Activated naive CD4-positive, alpha-beta T cell treated with anti-CD3 and anti-CD28 coated beads, Interleukin-2, amount 10 ng/mL, durations not matched to agents 7 days and 5 days (primary cell): ENCODE measurements at regions of chr20 and their contacts with region 1.

Region 1: DNA sequence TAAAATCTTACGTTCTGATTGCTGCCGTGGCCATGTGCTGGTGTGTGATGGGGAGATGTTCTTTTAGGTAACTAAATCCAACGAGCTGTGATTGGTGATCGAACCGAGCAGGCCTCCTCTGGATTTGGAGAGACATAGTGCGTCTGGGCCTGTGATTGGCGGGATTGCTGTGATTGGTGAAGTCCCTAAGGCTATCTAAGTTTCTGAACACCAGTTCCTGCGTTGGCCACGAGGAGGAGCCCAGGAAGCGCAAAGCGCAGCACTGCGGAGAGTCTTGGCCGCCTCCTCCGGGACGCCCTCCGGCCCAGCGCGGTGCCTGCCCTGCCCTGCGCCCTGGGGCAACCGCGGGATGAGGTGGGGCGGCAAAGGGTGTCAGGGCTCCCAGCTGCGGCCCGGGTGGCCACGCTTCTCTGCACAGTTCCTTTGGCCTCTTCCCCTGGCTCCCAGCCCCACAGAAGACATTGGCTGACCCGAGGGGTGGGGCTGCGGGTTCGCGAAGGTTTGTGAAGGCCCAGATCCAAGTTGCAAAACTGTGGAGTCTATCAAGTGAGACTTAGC is 33.0 kb downstream of the HNF4A start:
- DNase-seq: peak; percentile 83
- H3K4me3 Mint-ChIP-seq: no peak overlapping the region
- H3K27ac Mint-ChIP-seq: no peak overlapping the region
- H3K4me1 Mint-ChIP-seq: peaks cover 8% of the 10 kb centered on the region
- H3K27me3 Mint-ChIP-seq: peaks cover 25% of the 10 kb centered on the region

Region 2: DNA sequence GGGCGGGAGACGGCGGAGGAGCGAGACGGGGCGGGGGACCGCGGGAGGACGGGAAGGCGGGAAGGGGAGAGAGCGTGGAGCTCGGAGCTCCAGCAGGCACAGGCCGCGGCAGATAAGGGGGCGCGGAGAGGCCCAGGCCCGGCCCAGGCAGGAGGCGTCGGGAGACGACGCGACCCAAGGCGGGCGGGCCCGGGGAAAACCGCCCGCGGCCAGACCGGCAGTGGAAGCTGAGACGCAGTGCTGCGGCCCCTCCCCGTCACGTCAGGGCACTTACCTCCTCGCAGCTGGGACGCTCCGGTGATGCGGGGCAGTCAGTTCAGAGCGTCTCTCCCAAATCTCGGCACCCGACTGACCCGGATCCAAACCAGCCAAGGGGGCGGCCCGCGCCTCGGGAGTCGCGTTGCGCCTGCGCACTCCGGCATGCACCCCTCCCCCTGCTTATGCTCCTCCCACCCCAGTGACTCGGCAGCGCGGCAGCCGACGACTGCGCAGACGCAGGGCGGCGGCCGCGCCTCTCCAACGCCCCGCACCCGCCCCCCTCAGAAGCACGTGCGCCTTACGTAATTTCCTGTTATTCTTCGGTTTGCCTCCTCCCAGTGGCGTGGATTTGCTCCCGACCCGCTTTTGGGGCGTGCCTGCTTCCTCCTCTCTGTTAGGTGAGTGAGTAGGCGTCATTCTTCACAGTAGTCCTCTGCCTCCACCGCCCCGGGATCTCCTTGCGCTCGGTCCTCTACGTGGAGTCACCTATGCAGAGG is 177.9 kb before region 1 on chr20 and contains the start of gene OSER1:
- CTCF ChIA-PET with region 1: interaction called, 100 read pairs
- DNase-seq: peak; percentile 99
- H3K4me3 Mint-ChIP-seq: peak within 1 kb of the TSS; percentile 82
- H3K27ac Mint-ChIP-seq: peak within 1 kb of the TSS; percentile 98
- H3K4me1 Mint-ChIP-seq: peaks cover 54% of the 10 kb centered on the region
- H3K27me3 Mint-ChIP-seq: peaks cover 6% of the 10 kb centered on the region

Region 3: DNA sequence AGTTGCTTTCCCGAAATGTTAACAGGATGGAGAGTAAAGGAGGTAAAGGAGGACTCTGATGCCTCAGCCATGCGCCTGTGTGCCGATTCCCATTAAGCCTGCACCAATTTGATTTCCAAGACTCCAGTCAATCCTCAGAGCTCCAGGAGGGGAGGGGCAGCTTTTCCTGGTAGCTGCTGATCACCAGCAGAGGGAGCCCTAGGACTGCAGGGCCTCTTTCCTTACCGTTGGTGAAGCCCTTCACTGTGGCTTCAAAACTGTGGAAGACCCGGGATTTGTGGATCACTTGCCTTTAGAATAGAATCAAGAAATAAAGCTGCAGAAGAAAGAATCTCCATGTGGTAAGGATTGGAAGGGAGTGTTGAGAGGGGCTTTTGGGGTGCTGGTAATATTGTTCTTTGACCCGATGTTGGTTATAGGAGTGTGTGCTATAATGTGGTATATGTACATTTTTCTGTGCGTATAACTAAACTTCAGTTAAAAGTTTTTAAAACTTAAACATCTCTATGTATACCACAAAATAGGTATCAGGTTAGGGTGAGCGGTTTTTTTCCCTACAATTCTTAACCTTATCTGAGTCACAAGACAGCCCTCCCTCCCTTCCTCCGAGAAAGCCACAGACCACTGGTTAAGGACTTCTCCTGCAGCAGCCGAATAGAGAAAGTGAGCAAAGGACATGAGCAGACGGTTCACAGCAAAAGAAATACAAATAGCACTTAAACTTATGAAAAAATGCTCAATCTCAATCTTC is 171.0 kb before region 1 on chr20:
- CTCF ChIA-PET with region 1: interaction called, 100 read pairs
- DNase-seq: peak; percentile 82
- H3K4me3 Mint-ChIP-seq: peak overlapping the region; percentile 72
- H3K27ac Mint-ChIP-seq: peak overlapping the region; percentile 89
- H3K4me1 Mint-ChIP-seq: peaks cover 58% of the 10 kb centered on the region
- H3K27me3 Mint-ChIP-seq: no peaks in the 10 kb centered on the region

Region 4: DNA sequence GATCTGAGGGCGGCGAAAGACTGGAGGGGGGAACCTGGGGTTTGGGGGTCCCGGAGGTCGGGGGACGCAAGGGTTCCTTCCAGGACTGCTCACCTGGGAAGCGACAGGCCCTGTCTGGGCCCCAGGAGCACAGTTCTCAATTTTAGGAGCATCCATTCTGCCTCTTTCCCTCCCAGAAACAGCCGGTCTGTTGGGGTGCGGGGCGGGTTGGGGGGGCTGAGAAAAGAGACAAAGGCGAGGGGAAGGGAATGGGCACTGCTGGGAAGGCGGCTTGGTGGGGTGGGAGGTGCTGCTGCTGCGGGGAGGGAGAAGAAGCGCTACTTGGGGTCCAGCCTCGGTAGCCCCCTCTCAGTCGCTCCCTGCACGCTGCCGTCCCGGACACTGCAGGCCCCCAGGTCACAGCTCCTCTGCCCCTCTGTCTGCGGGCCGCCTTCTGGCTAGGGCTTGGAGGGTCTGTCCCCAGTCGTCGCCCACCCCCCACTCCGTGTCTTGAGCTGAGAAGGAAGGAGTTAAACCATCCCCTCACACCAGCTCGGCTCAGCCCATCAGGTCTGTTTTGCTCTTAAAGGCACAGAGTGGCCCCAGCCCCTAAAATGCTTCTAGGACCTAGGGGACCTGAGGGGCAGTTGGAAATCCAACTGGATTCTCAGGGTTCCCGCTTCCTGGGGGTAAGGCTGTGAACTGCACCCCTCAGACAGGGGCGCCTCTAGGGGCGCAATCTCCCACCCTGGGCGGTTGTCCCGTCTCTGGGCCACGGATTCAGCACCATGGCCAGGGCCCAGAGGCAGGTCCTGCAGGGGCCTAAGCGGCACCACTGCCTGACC is 140.7 kb before region 1 on chr20:
- CTCF ChIA-PET with region 1: no interaction called
- DNase-seq: peak; percentile 51
- H3K4me3 Mint-ChIP-seq: no peak overlapping the region
- H3K27ac Mint-ChIP-seq: no peak overlapping the region
- H3K4me1 Mint-ChIP-seq: no peaks in the 10 kb centered on the region
- H3K27me3 Mint-ChIP-seq: peaks cover 42% of the 10 kb centered on the region

Region 5: GRCh38 chr20:44288252-44288651 is 100.3 kb before region 1 on chr20:
- CTCF ChIA-PET with region 1: no interaction called
- DNase-seq: peak; percentile 35
- H3K4me3 Mint-ChIP-seq: no peak overlapping the region
- H3K27ac Mint-ChIP-seq: no peak overlapping the region
- H3K4me1 Mint-ChIP-seq: no peaks in the 10 kb centered on the region
- H3K27me3 Mint-ChIP-seq: peaks cover 5% of the 10 kb centered on the region

Region 6: DNA sequence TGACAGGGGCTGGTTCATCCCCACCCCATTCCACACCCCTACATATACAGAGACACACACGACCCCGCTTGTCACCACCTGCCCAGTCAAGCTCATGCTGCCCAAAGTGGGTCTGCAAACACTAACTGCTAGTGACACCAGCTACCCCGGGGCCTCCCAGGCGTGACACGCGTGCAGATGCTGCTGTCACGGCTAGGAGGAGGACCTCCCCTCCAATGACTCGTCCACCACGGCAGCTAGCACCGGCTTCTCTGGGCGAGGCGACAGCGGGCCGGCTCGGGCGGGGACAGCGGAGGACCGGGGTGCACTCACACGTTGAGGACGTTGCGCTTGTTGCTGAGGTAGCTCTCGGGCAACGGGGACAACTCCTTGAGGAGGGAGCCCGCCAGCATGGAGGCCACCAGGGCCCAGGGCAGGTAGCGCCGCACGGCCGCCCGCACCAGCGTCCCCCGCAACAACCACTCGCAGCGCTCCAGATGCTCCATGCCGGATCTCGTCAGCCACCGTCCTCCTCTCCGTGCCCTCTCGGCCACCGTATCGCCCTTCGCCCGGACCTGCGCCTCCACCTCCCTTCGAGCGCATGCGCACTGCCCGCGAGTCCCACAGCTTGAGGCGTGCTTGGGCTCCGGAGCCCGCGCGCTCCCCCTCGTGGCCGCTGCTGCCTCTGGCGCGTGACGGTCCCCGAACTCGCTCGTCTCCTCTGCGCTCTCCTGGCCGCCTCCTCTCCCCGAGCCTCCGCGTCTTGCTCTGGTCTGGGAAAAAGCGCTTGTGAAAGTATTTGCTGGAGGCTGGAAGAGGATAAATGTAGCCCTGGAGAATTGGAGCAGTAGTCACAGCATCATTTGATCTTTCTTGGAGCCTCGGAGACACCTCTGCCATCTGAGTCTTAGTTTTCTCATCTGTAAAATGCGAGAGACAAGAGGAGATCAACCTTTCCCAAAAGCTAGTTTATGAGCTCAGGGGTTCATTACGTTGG is 77.6 kb before region 1 on chr20 and contains the start of gene FITM2:
- CTCF ChIA-PET with region 1: interaction called, 12 read pairs
- DNase-seq: peak; percentile 98
- H3K4me3 Mint-ChIP-seq: peak within 1 kb of the TSS; percentile 89
- H3K27ac Mint-ChIP-seq: peak within 1 kb of the TSS; percentile 92
- H3K4me1 Mint-ChIP-seq: peaks cover 22% of the 10 kb centered on the region
- H3K27me3 Mint-ChIP-seq: peaks cover 13% of the 10 kb centered on the region

Region 7: DNA sequence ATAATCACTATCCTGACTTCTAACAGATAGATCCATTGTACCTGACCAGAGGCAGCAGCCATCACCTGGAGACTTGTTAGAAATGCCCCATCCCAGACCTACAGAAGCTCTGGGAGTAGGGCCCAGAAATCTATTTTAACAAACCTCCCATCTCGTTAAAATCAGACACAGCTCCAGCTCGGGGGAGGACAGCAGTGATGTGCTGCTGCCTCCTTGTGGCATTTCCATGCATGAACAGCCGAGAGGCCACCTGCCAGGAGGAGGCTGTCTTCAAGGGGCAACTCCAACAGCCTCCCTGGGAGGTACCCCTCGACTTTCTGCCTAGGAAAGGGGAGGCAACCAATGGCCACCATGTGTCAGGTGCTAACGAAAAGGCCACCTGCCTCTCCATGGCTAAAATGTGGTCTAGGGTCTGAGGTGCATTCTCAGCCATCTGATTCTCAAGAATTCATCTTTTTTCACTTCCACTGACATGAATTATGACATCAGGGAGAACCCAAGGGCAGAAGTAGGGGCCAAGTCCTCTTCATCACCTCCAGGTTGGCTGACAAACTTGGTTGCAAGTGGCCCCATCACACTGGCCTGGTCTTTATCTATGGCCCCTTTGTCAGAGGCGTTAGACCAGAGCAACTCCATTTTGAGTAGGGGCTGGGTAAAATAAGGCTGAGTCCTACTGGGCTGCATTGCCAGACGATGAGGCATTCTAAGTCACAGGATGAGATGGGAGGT is 345.0 kb after region 1 on chr20:
- CTCF ChIA-PET with region 1: interaction called, 10 read pairs
- DNase-seq: peak; percentile 77
- H3K4me3 Mint-ChIP-seq: no peak overlapping the region
- H3K27ac Mint-ChIP-seq: no peak overlapping the region
- H3K4me1 Mint-ChIP-seq: peaks cover 35% of the 10 kb centered on the region
- H3K27me3 Mint-ChIP-seq: peaks cover 6% of the 10 kb centered on the region